ENCODE measurements at regions of chr3 and their contacts with region 1.

Region 1: GRCh38 chr3:69306239-69307185 is 79.4 kb downstream of the FRMD4B start:
- DNase-seq: peak; percentile 51
- H3K4me3 ChIP-seq: no peak overlapping the region
- CTCF ChIP-seq: peak; percentile 87

Region 2: DNA sequence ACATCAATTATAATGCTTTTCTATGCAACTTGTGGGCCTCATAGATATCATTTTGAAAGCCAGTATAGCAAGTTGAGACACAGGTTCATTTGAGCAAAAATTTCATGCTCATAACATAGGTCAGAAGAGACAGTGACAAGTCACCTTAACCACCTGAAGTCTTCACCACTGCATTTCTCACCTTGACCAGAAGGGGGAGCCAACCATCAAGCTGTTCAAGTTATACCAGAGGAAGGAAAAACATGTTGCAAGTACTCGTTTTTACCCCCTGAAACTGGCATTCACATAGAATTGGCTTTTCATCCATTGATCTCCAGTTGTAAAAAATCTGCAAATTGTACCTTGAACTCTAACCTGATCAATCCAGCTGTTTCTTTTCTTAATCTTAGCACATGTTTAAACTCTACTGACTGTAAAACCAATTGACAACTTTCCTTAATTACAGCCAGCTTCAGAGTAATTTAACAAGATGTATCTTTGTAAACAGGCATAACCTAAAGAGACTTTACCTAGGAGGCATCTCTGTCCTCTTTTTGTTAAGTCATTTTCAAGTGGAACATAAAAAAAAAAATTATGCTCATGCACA is 185.5 kb before region 1 on chr3:
- CTCF ChIA-PET with region 1: interaction called, 110 read pairs
- POLR2A ChIA-PET with region 1: no interaction called
- DNase-seq: peak; percentile 31
- H3K4me3 ChIP-seq: no peak overlapping the region
- CTCF ChIP-seq: peak; percentile 85

Region 3: GRCh38 chr3:69294014-69294775 is 12.3 kb before region 1 on chr3:
- CTCF ChIA-PET with region 1: interaction called, 57 read pairs
- POLR2A ChIA-PET with region 1: no interaction called
- DNase-seq: peak; percentile 53
- H3K4me3 ChIP-seq: no peak overlapping the region
- CTCF ChIP-seq: no peak

Region 4: DNA sequence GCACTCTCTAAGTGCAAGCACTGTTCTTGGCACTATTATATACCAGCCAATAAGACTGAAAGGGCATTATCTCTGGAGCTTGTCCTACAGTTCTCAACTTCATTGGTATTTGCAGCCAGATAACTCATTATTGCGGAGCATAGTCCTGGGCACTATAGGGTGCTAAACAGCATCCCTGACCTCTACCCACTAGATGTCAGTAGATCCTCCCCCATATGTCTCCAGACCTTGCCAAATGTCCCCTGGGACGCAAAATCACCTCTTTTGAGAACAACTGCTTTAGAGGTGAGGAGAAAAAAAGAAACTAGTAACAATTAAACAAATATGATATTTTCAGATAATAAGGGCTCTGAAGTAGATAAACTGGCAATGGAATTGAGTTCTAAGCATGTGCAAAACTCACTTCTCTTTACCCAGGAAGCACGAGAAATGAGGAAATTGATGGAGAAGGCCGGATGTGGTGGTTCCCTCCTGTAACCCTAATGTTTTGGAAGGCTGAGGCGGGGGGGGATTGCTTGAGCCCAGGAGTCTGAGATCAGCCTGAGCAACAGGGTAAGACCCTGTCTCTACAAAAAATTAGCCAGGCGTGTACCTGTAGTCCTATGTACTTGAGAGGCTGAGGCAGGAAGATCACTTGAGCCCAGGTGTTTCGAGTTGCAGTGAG is 18.0 kb after region 1 on chr3:
- CTCF ChIA-PET with region 1: interaction called, 40 read pairs
- POLR2A ChIA-PET with region 1: no interaction called
- DNase-seq: no peak
- H3K4me3 ChIP-seq: no peak overlapping the region
- CTCF ChIP-seq: peak; percentile 3

Region 5: DNA sequence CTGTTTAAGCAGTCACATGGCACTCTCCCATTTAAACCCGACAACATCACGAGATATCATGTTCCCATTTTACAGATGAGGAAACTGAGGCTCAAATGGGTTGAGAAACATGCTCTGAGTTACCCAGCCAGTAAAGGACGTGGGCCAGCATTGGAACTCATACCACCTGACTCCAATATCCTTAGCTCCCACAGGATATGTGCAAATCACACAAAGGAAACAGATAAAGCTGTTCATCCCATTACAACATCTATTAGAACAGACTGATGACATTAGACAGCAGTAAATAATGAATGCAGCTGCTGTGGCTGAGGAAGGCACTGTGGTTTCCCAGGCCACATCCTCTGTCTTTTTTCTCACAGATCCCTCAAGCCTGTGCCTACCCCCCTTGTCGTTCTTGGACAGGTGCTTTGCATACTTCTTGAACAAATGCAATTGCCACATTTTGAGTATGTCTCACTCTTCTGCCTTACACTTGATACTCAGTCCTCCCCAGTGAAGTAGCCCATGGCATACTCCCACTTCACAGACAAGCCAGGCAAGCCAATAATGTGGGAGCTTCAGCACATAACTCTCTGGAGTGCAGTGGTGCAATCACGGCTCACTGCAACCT is 61.7 kb after region 1 on chr3:
- CTCF ChIA-PET with region 1: interaction called, 11 read pairs
- POLR2A ChIA-PET with region 1: no interaction called
- DNase-seq: no peak
- H3K4me3 ChIP-seq: no peak overlapping the region
- CTCF ChIP-seq: no peak

Region 6: GRCh38 chr3:69425261-69425660 is 118.7 kb after region 1 on chr3:
- CTCF ChIA-PET with region 1: interaction called, 182 read pairs
- POLR2A ChIA-PET with region 1: no interaction called
- DNase-seq: no peak
- H3K4me3 ChIP-seq: no peak overlapping the region
- CTCF ChIP-seq: peak; percentile 66